Body of pancreas (tissue), 4 donors: ENCODE measurements at regions of chr2 and their contacts with region 1.

Region 1: GRCh38 chr2:73085691-73086360 is 14.3 kb upstream of the SFXN5 start:
- DNase-seq: peak; percentile 86 to 93 (median 88)
- ATAC-seq: peak; percentile 72
- H3K4me3 ChIP-seq: no peak overlapping the region
- H3K27ac ChIP-seq: no peak overlapping the region
- H3K4me1 ChIP-seq: peaks cover 16% of the 10 kb centered on the region
- H3K27me3 ChIP-seq: no peaks in the 10 kb centered on the region
- CTCF ChIP-seq: peak; percentile 85 to 94 (median 88)
- POLR2A ChIP-seq: no peak

Region 2: DNA sequence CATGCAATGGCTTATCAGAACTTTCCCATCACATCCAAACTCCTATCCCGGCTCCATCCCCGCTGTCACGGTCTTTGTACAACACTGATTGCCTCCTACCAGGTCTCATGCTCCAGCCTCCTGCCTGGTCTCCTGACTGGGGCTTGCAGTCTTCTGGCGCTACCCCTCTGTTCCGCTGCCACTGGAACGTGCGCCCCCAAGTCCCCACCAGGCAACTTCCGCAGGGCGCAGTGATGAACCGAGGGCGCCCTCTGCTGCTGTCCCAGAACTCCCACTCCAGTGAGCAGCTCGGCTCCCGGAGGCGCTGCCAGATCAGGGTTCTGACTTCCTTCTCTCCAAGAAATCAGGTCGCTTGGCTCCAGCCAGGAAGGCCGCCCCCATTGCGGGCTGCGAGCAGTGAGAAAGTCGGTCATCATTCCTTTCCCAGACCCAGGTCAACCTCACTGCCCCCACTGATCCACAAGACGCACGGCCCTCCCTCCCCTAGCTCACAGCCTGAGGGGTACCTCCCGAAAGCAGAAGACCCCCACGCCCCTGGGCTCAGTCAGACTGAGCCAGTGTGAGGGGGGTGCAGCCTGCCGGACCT is 70.8 kb after region 1 on chr2:
- intact Hi-C with region 1: loop called (anchors 5 kb)
- DNase-seq: peak; percentile 62 to 76 (median 66)
- ATAC-seq: peak; percentile 47
- H3K4me3 ChIP-seq: no peak overlapping the region
- H3K27ac ChIP-seq: no peak overlapping the region
- H3K4me1 ChIP-seq: peaks cover 7% of the 10 kb centered on the region
- H3K27me3 ChIP-seq: no peaks in the 10 kb centered on the region
- CTCF ChIP-seq: peak; percentile 38 to 79 (median 62)
- POLR2A ChIP-seq: no peak

Region 3: DNA sequence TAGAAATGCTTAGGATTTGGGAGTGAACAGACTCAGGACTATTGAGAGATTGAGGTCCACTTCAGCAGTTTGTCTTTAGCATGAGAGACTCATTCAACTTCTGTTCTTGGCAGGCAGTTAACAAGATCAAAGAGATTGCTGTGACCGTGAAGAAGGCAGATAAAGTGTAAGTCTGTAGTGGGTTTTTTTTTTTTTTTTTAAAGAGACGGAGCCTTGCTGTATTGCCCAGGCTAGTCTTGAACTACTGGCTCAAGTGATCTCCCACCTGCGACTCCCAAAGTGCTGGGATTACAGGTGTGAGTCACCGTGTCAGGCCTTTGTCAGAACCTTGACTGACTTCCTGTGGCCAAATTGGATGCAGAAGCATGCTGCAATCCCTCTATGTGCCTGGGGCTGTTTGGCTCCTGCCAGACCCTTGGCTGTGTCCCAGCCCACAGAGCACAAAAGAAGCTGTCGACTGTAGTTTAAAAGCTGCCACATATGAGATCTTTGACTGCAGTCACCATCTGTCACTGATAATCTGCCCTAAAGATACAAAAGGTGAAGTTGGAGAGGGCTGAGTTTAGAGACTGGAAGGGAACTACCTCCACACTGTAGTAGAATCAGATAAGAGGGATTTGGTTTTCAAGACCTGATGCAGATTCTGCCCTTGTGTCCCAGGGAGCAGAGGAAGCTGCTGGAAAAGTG is 158.2 kb after region 1 on chr2:
- intact Hi-C with region 1: no loop called
- DNase-seq: no peak
- ATAC-seq: no peak
- H3K4me3 ChIP-seq: no peak overlapping the region
- H3K27ac ChIP-seq: no peak overlapping the region
- H3K4me1 ChIP-seq: peaks cover 8% of the 10 kb centered on the region
- H3K27me3 ChIP-seq: no peaks in the 10 kb centered on the region
- CTCF ChIP-seq: no peak
- POLR2A ChIP-seq: no peak